ENCODE measurements at regions of chr11 and their contacts with region 1.

Region 1: DNA sequence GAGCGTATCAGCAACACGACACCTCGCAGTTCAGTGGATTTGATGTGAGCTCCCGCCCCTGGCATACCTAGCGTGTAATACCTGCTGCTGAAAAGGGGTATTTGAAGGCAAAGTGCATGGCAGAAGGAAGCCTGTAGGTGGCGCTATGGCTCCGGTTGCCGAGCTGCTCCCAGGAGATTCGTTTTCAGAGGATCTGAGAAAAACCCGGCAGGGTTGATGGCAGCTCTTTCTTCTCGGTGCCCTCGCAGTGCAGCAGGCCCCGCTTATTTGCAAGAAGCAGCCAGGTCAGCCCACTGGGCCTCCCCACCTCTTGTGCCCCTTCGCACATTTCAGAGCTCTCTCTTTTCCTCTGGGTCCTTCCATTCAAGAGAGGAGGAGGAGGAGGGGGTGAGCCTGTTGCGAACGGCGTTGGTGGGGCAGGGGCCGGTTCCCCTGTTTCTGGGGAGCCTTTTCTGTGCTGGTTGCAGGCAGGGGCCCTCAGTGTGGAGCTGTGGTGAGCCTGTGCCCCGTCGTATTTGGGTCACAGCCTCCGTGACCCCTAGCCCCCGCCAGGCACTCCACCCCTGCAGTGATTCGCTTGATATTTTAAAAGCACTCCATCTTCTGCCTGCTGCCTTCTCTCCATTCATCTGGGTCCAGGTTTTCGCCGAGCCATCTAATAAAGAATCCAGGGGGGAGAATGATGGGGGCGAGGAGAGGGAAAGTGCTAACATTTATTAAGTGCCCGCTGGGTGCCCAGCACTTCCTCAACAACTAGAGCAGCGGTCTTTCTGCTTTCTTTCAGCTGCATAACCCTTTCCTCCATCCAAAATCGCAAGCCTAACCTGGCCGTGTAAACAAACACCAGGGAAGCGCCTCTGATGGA is 85.3 kb upstream of the SYT13 start:
- DNase-seq: peak; percentile 84
- H3K4me3 Mint-ChIP-seq: no peak overlapping the region
- H3K27ac Mint-ChIP-seq: no peak overlapping the region
- H3K4me1 Mint-ChIP-seq: peaks cover 13% of the 10 kb centered on the region
- H3K27me3 Mint-ChIP-seq: peaks cover 12% of the 10 kb centered on the region

Region 2: DNA sequence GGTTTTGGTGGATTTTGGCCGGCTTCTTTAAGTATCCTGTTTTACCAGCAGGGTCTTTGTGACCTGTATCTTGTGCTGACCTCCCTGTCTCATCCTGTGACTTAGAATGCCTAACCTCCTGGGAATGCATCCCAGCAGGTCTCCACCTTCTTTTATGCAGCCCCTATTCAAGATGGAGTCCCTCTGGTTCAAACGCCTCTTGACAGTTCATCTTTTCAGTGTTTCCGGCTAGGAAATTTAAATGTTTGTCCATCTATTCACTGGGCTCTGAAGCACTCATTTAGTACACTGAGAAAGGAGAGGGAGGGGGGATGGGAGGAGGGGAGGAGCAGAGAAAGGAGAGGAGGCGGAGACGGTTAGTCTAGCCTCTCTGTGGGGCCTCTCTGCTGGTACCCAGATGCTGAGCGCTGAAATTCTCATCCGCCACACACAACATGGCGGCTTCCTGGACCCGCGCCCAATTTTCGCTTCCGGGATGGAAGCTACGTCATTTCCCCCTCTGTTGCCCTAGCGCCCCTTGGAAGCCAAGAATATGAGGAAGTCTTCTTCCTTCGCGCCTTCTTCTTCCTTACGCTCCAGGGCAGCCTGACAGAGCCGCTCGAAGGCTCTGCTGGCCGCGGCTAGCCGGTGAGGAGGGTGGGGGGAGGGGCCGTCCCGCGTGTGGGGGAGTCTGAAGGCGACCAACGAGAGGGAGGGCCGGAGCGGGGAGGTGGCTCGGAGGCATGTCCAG is 16.3 kb before region 1 on chr11:
- CTCF ChIA-PET with region 1: interaction called, 12 read pairs
- intact Hi-C with region 1: no loop called
- DNase-seq: peak; percentile 92
- H3K4me3 Mint-ChIP-seq: peak overlapping the region; percentile 73
- H3K27ac Mint-ChIP-seq: peak overlapping the region; percentile 71
- H3K4me1 Mint-ChIP-seq: peaks cover 18% of the 10 kb centered on the region
- H3K27me3 Mint-ChIP-seq: no peaks in the 10 kb centered on the region

Region 3: GRCh38 chr11:45518141-45518832 is 146.8 kb after region 1 on chr11:
- CTCF ChIA-PET with region 1: no interaction called
- intact Hi-C with region 1: no loop called
- DNase-seq: no peak
- H3K4me3 Mint-ChIP-seq: no peak overlapping the region
- H3K27ac Mint-ChIP-seq: no peak overlapping the region
- H3K4me1 Mint-ChIP-seq: no peaks in the 10 kb centered on the region
- H3K27me3 Mint-ChIP-seq: peaks cover 2% of the 10 kb centered on the region

Measured in activated naive CD4-positive, alpha-beta T cell treated with anti-CD3 and anti-CD28 coated beads for 36 hours (primary cell).